ENCODE measurements at regions of chr11 and their contacts with region 1.

Region 1: GRCh38 chr11:121250843-121251242 is 41.7 kb upstream of the SC5D start:
- DNase-seq: no peak
- H3K4me3 ChIP-seq: no peak overlapping the region
- H3K4me1 ChIP-seq: peaks cover 4% of the 10 kb centered on the region
- H3K27me3 ChIP-seq: no peaks in the 10 kb centered on the region

Region 2: GRCh38 chr11:121153472-121153871 is 97.4 kb before region 1 on chr11:
- in situ Hi-C with region 1: loop called (anchors 25 kb)
- DNase-seq: peak in 1 of 2 experiments; percentile 10
- H3K4me3 ChIP-seq: no peak overlapping the region
- H3K4me1 ChIP-seq: peaks cover 10% of the 10 kb centered on the region
- H3K27me3 ChIP-seq: no peaks in the 10 kb centered on the region

Region 3: DNA sequence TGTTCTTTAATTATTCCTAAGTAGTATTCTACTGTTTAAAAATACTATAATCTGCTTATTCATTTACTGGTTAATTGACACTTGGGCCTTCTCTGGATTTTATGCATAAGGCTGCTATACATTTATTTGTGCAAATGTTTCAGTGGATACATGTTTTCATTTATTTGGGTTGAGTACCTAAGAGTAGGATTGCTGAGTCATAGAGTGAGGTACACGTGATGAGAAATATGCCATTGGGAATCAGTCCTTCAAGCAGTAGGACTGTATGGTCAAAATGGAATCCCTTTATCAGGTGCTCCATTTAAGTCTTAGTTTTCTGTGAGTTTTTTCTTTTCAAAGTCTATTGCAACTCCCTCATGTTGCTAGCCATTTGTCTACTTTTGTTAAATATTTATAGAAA is 477.1 kb after region 1 on chr11:
- in situ Hi-C with region 1: no loop called
- DNase-seq: no peak
- H3K4me3 ChIP-seq: no peak overlapping the region
- H3K4me1 ChIP-seq: no peaks in the 10 kb centered on the region
- H3K27me3 ChIP-seq: no peaks in the 10 kb centered on the region; the same call in 1 of the 2 replicates

Measured in HAP-1 (cell line).